ENCODE measurements at regions of chr3 and their contacts with region 1.

Region 1: GRCh38 chr3:170368921-170369320 is 11.4 kb downstream of the SKIL start:
- DNase-seq: no peak
- H3K4me3 ChIP-seq: no peak overlapping the region
- H3K27ac ChIP-seq: no peak overlapping the region
- H3K4me1 ChIP-seq: peaks cover 27% of the 10 kb centered on the region
- H3K27me3 ChIP-seq: no peaks in the 10 kb centered on the region
- CTCF ChIP-seq: peak; percentile 71; the same call in 1 of the 2 replicates

Region 2: GRCh38 chr3:170098753-170099152 is 270.2 kb before region 1 on chr3:
- CTCF ChIA-PET with region 1: interaction called, 10 read pairs
- POLR2A ChIA-PET with region 1: no interaction called
- intact Hi-C with region 1: no loop called
- DNase-seq: no peak
- H3K4me3 ChIP-seq: no peak overlapping the region
- H3K27ac ChIP-seq: no peak overlapping the region
- H3K4me1 ChIP-seq: no peaks in the 10 kb centered on the region
- H3K27me3 ChIP-seq: no peaks in the 10 kb centered on the region
- CTCF ChIP-seq: no peak

Region 3: DNA sequence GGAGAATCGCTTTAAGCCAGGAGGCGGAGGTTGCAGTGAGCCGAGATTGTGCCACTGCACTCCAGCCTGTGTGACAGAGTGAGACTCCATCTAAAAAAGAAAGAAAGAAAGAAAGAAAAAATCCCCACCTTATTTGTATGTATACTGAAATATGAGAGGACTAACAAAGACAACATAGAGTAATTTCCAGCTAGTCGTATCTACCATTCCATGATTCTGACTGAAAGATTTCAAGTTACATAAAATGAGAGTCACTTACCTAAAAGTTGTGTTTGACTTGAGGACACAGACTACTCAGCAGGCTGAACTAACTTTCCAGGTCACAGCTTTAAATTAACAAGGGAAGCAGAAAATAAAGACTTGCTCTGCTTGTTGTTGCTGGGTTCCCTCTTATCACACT is 165.5 kb before region 1 on chr3:
- CTCF ChIA-PET with region 1: interaction called, 14 read pairs
- POLR2A ChIA-PET with region 1: no interaction called
- intact Hi-C with region 1: no loop called
- DNase-seq: no peak
- H3K4me3 ChIP-seq: no peak overlapping the region
- H3K27ac ChIP-seq: no peak overlapping the region
- H3K4me1 ChIP-seq: no peaks in the 10 kb centered on the region
- H3K27me3 ChIP-seq: no peaks in the 10 kb centered on the region
- CTCF ChIP-seq: no peak

Region 4: DNA sequence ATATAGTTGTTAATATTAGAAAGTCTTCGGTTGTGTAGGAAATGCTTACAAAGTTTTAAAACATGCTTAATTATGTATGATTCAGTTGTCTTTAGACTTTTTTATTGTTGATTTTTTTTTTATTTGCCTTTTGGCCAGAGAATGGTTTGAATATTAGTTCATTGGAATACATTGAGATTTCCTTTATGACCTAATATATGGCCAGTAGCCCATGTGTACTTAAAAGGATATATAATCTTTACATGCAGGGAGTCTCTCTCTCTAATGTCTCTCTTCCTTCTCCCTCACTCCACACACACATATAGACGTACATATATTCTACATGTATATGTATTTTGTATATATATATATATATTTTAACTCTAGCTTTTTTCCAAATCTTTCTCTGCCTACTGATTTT is 78.7 kb before region 1 on chr3:
- CTCF ChIA-PET with region 1: no interaction called
- POLR2A ChIA-PET with region 1: no interaction called
- intact Hi-C with region 1: loop called (anchors 5 kb)
- DNase-seq: no peak
- H3K4me3 ChIP-seq: no peak overlapping the region
- H3K27ac ChIP-seq: no peak overlapping the region
- H3K4me1 ChIP-seq: no peaks in the 10 kb centered on the region
- H3K27me3 ChIP-seq: no peaks in the 10 kb centered on the region
- CTCF ChIP-seq: no peak

Region 5: DNA sequence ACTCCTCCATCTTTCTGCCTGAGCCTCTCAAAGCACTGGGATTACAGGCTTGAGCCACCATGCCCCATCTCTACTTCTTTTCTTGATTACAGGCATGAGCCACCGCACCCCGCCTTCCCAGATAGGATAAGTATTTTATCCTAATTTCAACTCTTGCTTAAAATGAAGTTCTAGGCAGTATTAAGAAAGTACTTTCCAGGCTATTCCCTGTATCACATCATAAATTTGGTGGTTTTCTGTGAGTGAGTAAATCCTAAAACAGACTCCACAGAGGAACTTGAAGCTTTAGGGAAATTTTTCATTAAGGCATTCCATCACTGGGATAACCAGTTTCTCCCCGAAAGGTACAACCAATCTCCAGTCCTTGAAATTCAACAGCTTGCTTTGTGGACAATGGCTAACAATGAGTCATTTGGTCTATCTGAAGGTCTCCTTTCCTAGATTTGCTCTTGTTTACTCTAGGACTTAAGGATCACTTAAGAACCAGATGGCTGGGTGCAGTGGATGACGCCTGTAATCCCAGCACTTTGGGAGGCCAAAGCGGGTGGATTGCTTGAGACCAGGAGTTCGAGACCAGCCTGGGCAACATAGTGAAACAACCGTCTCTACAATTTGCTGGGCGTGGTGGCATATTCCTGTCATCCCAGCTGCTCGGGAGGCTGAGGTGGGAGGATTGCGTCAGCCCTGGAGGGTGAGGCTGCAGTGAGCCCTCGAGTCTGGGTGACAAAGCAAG is 61.1 kb before region 1 on chr3:
- CTCF ChIA-PET with region 1: interaction called, 5 read pairs
- POLR2A ChIA-PET with region 1: no interaction called
- intact Hi-C with region 1: loop called (anchors 2 kb)
- DNase-seq: peak; percentile 59 to 99
- H3K4me3 ChIP-seq: no peak overlapping the region
- H3K27ac ChIP-seq: peak overlapping the region; percentile 42
- H3K4me1 ChIP-seq: peaks cover 19% of the 10 kb centered on the region
- H3K27me3 ChIP-seq: no peaks in the 10 kb centered on the region
- CTCF ChIP-seq: no peak

Measured in PC-9 (cell line).